ENCODE measurements at regions of chr16 and their contacts with region 1.

Region 1: DNA sequence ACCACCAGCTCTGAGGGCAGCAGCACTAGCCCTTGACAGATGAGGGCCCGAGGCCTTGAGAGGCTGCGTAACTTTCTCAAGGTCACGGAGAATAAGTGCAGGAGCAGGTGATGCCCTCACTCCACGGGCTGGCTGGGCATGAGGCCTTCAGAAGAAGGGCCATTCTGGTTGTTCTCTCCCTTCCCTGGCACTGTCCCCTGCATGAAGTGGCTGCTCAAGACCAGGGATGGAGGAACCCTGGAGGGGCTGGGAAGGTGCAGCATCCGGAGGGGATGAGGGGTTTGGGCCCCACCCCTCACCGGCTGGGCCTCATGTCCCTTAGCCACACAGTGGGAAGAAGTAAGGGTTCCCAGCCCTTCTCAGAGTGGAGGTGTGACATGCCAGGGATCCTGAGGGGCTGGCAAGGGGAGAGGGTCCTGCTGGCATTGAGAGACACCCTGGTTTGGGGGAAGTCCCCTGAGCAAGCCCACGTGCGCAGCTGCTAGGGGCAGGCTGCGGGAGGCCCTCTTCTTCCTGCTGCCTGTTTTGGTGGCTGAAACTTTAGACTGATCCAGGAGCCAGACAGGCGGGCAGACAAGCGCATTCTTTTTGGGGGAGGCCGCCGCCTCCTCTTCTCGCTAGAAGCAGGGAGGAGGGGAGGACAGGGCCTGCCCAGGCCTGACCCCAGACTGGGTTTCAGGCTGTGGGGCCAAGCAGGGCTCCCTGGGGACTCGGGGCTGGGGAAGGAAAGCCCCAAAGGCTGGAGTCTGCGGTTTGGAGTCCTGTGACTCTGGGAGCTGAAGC is 74.0 kb downstream of the N4BP1 start:
- DNase-seq: peak; percentile 93

Region 2: GRCh38 chr16:48385272-48386150 is 150.5 kb before region 1 on chr16 and contains the start of gene SIAH1:
- intact Hi-C with region 1: loop called in 1 of 2 experiments (anchors 10 kb)
- DNase-seq: peak; percentile 95
- total RNA-seq, gene SIAH1: 25.6 to 27.0 TPM

Region 3: GRCh38 chr16:48479955-48480354 is 56.1 kb before region 1 on chr16:
- intact Hi-C with region 1: no loop called
- DNase-seq: no peak

Measured in posterior vena cava (tissue), 2 donors.